Activated naive CD4-positive, alpha-beta T cell treated with anti-CD3 and anti-CD28 coated beads for 36 hours (primary cell): ENCODE measurements at regions of chr19 and their contacts with region 1.

Region 1: GRCh38 chr19:47112997-47113849 is at the start of gene ZC3H4:
- DNase-seq: peak; percentile 100
- H3K4me3 Mint-ChIP-seq: peak within 1 kb of the TSS; percentile 99
- H3K27ac Mint-ChIP-seq: peak within 1 kb of the TSS; percentile 100
- H3K4me1 Mint-ChIP-seq: peaks cover 26% of the 10 kb centered on the region
- H3K27me3 Mint-ChIP-seq: no peaks in the 10 kb centered on the region
- total RNA-seq, gene ZC3H4: 46.0 to 48.8 TPM

Region 2: DNA sequence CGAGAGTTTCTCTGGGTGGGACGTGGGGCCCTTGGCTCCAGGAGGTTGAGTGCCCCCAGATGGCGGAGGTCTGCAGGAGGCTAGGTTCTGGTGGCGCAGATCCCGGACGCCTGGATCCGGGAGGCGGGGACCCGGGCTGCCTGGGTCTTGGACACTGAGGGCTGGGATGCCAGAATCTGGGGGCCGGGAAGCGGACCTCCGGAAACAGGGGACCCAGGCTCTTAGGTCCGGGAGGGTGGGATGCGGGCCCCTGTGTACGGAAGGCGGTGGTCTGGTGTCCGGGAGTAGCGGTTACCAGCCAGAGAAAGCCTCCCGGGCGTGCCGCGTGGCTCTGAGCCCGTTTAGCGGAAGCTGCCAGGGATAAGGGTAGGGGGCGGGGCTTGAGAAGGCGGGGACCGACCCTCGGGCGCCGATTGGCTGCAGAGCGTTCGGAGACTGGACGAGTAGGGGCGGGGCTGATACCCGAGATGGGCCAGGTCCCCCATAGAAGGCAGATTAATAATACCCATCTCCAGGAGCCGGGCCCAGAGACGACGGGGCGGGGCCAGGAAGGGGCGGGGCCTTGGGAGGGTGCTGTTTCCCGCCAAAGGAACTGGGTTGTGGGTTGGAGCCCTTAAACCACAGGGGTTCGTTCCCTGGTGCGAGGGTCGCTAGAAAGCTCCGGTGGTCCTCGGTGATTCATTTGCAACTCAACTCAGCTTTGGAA is 324.8 kb before region 1 on chr19 and contains the start of gene SLC1A5:
- CTCF ChIA-PET with region 1: no interaction called
- intact Hi-C with region 1: loop called (anchors 2 kb)
- DNase-seq: peak; percentile 99
- H3K4me3 Mint-ChIP-seq: peak within 1 kb of the TSS; percentile 95
- H3K27ac Mint-ChIP-seq: peak within 1 kb of the TSS; percentile 99
- H3K4me1 Mint-ChIP-seq: peaks cover 38% of the 10 kb centered on the region
- H3K27me3 Mint-ChIP-seq: no peaks in the 10 kb centered on the region
- total RNA-seq, gene SLC1A5: 139 TPM

Region 3: GRCh38 chr19:46984077-46985010 is 128.9 kb before region 1 on chr19:
- CTCF ChIA-PET with region 1: no interaction called
- intact Hi-C with region 1: no loop called
- DNase-seq: no peak
- H3K4me3 Mint-ChIP-seq: no peak overlapping the region
- H3K27ac Mint-ChIP-seq: no peak overlapping the region
- H3K4me1 Mint-ChIP-seq: peaks cover 5% of the 10 kb centered on the region
- H3K27me3 Mint-ChIP-seq: no peaks in the 10 kb centered on the region

Region 4: GRCh38 chr19:47047763-47048405 is 65.3 kb before region 1 on chr19:
- CTCF ChIA-PET with region 1: no interaction called
- intact Hi-C with region 1: loop called (anchors 1 kb)
- DNase-seq: peak; percentile 91
- H3K4me3 Mint-ChIP-seq: peak overlapping the region; percentile 98
- H3K27ac Mint-ChIP-seq: peak overlapping the region; percentile 84
- H3K4me1 Mint-ChIP-seq: peaks cover 13% of the 10 kb centered on the region
- H3K27me3 Mint-ChIP-seq: no peaks in the 10 kb centered on the region

Region 5: DNA sequence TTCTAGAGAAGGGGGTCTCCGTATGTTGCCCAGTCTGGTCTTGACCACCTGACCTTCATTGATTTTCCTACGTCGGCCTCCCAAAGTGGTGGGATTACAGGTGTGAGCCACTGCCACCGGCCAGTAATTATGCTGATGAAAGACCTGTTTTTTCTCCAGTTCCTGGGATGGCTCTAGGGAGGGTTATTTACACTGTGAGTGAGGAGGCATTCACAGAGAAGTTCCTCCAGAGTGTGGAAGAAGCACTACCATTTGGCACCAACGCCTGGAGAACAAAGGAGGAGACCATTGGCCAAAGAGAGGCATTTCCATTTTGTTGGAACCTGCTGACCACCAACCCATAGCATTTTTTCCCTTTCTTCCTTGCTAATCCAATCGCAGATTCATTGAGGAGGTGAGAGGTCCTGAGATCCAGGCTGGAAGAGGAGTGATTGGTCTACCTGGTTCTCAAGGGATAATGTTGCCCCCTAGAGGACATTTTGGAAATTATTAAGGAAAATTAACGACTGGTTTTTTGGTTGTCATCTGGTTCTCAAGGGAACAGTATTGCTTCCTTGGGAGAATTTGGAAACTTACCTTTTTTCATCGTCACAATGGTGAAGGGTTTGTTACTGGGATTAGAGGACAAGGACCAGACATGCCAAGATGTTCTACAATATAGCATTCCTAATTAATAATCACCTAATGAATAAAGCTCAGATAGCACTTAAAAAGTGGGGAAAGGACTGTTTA is 11.9 kb after region 1 on chr19:
- CTCF ChIA-PET with region 1: interaction called, 24 read pairs
- intact Hi-C with region 1: loop called (anchors 2 kb)
- DNase-seq: no peak
- H3K4me3 Mint-ChIP-seq: no peak overlapping the region
- H3K27ac Mint-ChIP-seq: no peak overlapping the region
- H3K4me1 Mint-ChIP-seq: peaks cover 5% of the 10 kb centered on the region
- H3K27me3 Mint-ChIP-seq: no peaks in the 10 kb centered on the region

Region 6: DNA sequence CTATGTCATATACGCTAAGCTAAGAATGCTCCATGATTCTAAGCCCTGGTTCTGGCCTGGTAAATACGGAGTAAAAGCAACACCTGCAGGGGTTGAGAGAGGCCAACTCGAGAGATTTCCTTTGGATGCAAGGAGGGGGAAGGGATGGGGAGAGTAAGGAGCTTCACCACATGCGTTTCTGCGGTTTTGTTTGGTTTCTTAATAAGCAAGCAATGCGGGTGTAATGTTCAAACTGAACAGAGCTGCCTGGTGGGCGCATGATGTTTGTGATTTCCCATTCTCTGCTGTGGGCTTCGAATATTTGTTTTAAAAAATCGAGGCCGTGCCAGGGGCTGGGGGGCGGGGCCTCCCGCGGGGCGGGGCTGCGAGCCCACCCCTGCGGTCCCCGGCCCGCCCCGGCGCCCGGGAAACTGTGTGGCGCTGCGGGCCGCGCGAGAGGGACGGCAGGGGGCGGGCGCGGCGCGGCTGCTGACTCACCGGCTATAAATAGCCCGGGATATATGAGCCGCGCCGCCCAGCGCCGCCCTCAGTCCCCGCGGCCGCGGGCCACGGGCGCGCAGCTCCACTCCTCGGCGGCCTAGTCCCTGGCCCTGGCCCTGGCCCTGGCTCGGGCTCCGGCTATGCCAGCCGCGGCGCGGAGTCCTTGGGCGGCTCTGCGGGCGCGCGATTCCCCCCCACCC is 112.7 kb after region 1 on chr19:
- CTCF ChIA-PET with region 1: no interaction called
- intact Hi-C with region 1: loop called (anchors 1 kb)
- DNase-seq: peak; percentile 83
- H3K4me3 Mint-ChIP-seq: peak overlapping the region; percentile 83
- H3K27ac Mint-ChIP-seq: peak overlapping the region; percentile 67
- H3K4me1 Mint-ChIP-seq: peaks cover 10% of the 10 kb centered on the region
- H3K27me3 Mint-ChIP-seq: no peaks in the 10 kb centered on the region

Region 7: GRCh38 chr19:47600246-47601179 is 487.3 kb after region 1 on chr19:
- CTCF ChIA-PET with region 1: no interaction called
- intact Hi-C with region 1: loop called (anchors 2 kb)
- DNase-seq: peak; percentile 100
- H3K4me3 Mint-ChIP-seq: peak overlapping the region; percentile 85
- H3K27ac Mint-ChIP-seq: peak overlapping the region; percentile 88
- H3K4me1 Mint-ChIP-seq: peaks cover 17% of the 10 kb centered on the region
- H3K27me3 Mint-ChIP-seq: no peaks in the 10 kb centered on the region